ENCODE measurements at regions of chr7 and their contacts with region 1.

Region 1: DNA sequence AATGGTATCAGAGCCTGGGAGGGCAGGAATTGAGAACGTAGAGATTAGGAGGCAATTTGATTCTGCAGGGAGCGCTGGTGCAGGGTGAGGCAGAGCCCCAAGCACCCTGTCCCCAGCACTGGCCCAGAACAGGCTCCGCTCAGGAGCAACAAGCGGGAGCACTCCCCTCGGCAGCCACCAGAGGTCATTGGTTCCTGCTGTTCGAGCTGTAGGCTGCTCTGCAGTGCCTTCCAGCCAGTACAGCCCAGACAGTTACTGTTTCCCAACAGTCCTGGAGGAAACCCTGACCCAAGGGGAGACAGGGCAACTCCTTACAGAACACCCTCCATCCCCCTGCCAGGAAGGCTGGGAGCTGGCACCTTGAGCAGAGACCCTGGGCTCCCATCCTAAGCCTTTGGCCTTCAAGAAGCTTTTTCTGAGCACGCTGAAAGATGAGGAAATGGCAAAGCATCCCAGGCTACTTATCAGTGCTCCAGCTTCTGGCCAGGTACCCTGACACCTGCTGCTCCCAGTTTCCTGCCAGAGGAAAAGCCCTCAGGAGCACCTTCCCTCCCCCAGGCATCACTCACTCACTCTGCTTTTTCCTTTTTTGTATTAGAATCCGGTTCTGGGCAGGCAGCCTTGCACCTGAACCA is 71.2 kb upstream of the EFCAB10 start:
- DNase-seq: peak; percentile 75 to 79
- ATAC-seq: peak; percentile 86 to 95 (median 90)
- H3K4me3 ChIP-seq: no peak overlapping the region
- H3K27ac ChIP-seq: no peak overlapping the region
- H3K4me1 ChIP-seq: peaks cover 0 to 40% (median 23%) of the 10 kb centered on the region in 9 donors
- H3K27me3 ChIP-seq: no peaks in the 10 kb centered on the region
- CTCF ChIP-seq: peak; percentile 70 to 94 (median 92)

Region 2: GRCh38 chr7:105589356-105590077 is 63.0 kb before region 1 on chr7:
- intact Hi-C with region 1: no loop called
- DNase-seq: peak in 1 of 2 donors; percentile 38
- ATAC-seq: peak; percentile 63 to 88 (median 66)
- H3K4me3 ChIP-seq: no peak overlapping the region
- H3K27ac ChIP-seq: no peak overlapping the region
- H3K4me1 ChIP-seq: peaks cover 0 to 16% (median 5%) of the 10 kb centered on the region in 9 donors
- H3K27me3 ChIP-seq: no peaks in the 10 kb centered on the region
- CTCF ChIP-seq: peak in 8 of 9 donors; percentile 20 to 58 (median 52)

Region 3: GRCh38 chr7:105707967-105708762 is 55.7 kb after region 1 on chr7:
- intact Hi-C with region 1: loop called in 1 of 10 experiments (anchors 10 kb)
- DNase-seq: no peak
- ATAC-seq: peak in 2 of 8 donors; percentile 48 to 51
- H3K4me3 ChIP-seq: no peak overlapping the region
- H3K27ac ChIP-seq: no peak overlapping the region
- H3K4me1 ChIP-seq: peaks cover 0 to 16% (median 8%) of the 10 kb centered on the region in 9 donors
- H3K27me3 ChIP-seq: no peaks in the 10 kb centered on the region
- CTCF ChIP-seq: no peak

Region 4: DNA sequence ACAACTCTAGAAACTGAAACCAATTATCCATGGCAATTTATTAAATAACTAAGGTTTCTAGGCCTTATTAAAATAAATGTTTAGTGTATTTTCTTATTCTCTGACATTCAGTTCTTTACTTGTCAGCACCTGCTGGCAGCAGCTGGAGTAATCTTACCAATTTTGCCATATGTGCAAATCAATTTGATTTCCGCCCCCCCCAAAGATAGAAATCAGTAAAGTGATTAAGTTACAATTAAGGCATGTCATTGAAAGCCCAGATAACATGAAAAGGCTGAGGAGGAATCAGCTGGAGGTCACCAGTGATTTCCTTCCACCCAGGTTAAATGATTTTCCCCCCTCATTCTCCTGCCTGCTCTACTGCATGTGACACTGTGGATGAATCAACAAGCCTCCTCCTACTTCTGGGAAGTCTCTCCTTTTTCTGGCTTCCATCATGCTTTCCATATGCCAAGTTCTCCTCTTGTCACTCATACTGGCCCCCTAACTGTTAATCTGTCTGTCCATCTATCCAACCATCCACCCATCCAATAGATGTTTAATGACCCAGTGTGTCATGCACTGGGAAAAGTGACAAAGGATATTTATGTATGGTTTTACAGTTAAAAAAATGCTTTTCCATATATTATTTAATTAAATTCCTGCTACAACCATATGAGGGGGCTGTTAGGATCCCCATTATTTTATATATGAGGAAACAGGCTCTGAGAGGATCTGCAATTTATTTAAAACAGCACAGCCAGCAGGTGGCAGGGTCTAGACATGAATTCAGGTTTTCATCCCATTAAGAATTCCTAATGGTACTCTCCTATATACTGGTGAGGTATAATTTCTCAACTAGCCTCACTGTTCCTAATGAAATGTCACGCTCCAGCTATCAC is 107.4 kb after region 1 on chr7:
- intact Hi-C with region 1: loop called in 7 of 10 experiments (anchors 2 to 10 kb)
- DNase-seq: peak; percentile 18 to 36
- ATAC-seq: peak in 5 of 8 donors; percentile 38 to 73 (median 66)
- H3K4me3 ChIP-seq: no peak overlapping the region
- H3K27ac ChIP-seq: no peak overlapping the region
- H3K4me1 ChIP-seq: peaks cover 0 to 19% (median 0%) of the 10 kb centered on the region in 9 donors
- H3K27me3 ChIP-seq: no peaks in the 10 kb centered on the region
- CTCF ChIP-seq: peak; percentile 41 to 73 (median 66)

Region 5: DNA sequence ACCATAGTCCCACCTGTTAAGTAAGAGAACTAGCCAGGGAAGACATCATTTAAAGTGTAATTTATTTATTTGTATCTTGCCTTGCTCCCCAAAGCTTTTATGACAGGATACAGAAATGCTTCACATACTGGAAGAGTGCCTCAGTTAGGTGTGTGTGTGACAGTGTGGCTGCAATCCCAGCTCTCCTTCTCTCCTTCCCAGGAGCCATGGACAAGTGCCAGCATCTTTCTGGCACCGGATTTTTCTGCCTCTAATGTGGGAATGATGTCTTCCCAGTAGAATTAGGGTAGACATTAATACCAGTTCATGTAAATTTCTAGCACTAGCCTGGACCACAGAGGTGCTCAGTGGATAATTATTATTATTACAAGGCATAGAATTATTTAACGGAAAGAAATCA is 254.2 kb after region 1 on chr7:
- intact Hi-C with region 1: no loop called
- DNase-seq: peak in 1 of 2 donors; percentile 6
- ATAC-seq: no peak
- H3K4me3 ChIP-seq: no peak overlapping the region
- H3K27ac ChIP-seq: no peak overlapping the region
- H3K4me1 ChIP-seq: peaks cover 0 to 6% (median 0%) of the 10 kb centered on the region in 9 donors
- H3K27me3 ChIP-seq: no peaks in the 10 kb centered on the region
- CTCF ChIP-seq: no peak

Region 6: DNA sequence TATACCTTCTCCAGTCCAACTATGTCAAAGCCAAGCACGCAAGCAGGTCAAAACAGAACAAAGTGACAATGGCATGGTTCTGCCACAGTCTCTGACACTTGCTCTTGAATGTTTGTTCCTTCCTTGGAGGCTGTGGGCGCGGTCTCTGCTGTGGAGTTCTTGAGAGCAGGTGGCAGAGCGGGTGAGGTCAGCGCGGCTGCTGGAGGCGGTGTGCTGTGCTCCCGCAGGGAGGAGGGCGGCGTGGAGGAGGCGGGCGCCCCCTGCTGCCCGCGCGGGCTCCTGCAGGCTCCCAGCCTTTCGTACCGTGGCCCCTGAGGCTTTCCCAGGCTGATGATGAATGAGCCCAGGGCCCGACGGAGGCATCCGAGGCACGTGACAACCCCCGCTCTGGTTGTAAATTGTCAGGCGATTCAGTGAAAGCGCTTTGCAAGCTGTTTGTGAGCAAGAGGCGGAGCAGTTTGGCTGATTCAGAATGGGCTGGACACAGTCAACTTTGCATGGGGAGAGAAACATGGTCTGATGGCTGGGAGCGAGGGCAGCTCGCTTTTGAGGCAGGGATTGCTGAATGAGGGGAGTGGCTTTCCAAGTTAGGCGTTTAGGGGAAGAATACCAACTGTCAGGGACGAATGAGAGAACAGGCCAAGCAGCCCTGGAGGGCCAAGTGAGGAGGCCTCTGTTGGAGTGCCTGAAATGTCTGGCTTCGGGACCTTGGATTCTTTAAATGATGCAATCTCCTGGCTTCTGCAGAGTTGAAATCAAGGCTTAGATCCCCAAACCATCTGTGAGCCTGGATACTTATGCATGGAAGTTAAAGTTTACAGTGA is 357.1 kb after region 1 on chr7:
- intact Hi-C with region 1: loop called in 5 of 10 experiments (anchors 2 to 10 kb)
- DNase-seq: peak; percentile 57 to 78
- ATAC-seq: peak; percentile 93 to 98 (median 96)
- H3K4me3 ChIP-seq: peak overlapping the region in 1 of 10 donors; percentile 2
- H3K27ac ChIP-seq: peak overlapping the region in 1 of 10 donors; percentile 6
- H3K4me1 ChIP-seq: peaks cover 0 to 16% (median 5%) of the 10 kb centered on the region in 9 donors
- H3K27me3 ChIP-seq: peaks cover 0 to 3% (median 0%) of the 10 kb centered on the region in 7 donors
- CTCF ChIP-seq: peak; percentile 93 to 98 (median 96)

Region 7: GRCh38 chr7:106153891-106154449 is 501.5 kb after region 1 on chr7:
- intact Hi-C with region 1: loop called in 2 of 10 experiments (anchors 10 kb)
- DNase-seq: peak; percentile 82 to 85
- ATAC-seq: peak; percentile 92 to 99 (median 96)
- H3K4me3 ChIP-seq: peak overlapping the region in 2 of 10 donors; percentile 2 to 23
- H3K27ac ChIP-seq: no peak overlapping the region
- H3K4me1 ChIP-seq: peaks cover 0 to 17% (median 10%) of the 10 kb centered on the region in 9 donors
- H3K27me3 ChIP-seq: peaks cover 0 to 51% (median 0%) of the 10 kb centered on the region in 7 donors
- CTCF ChIP-seq: peak; percentile 91 to 98 (median 96)

Measured in heart right ventricle (tissue), 16 donors.